T-cell (primary cell): ENCODE measurements at regions of chr16 and their contacts with region 1.

Region 1: GRCh38 chr16:29641561-29641960 is 21.5 kb upstream of the SPN start:
- DNase-seq: peak in 2 of 35 experiments; percentile 6 to 56
- ATAC-seq: peak; percentile 33 to 72 (median 50)
- H3K4me3 ChIP-seq: no peak overlapping the region
- H3K4me3 Mint-ChIP-seq: peak overlapping the region in 1 of 3 donors; percentile 75
- H3K27ac ChIP-seq: peak overlapping the region; percentile 23
- H3K27ac Mint-ChIP-seq: peak overlapping the region; percentile 34 to 65
- H3K4me1 ChIP-seq: peaks cover 6 to 19% of the 10 kb centered on the region in 2 experiments
- H3K4me1 Mint-ChIP-seq: peaks cover 22 to 33% (median 30%) of the 10 kb centered on the region in 3 donors
- H3K27me3 ChIP-seq: no peaks in the 10 kb centered on the region
- H3K27me3 Mint-ChIP-seq: no peaks in the 10 kb centered on the region

Region 2: GRCh38 chr16:29656688-29657523 is 15.3 kb after region 1 on chr16:
- CTCF ChIA-PET with region 1: no interaction called
- POLR2A ChIA-PET with region 1: interaction called in 1 of 2 experiments, 11 read pairs
- DNase-seq: no peak
- ATAC-seq: no peak
- H3K4me3 ChIP-seq: no peak overlapping the region
- H3K4me3 Mint-ChIP-seq: no peak overlapping the region
- H3K27ac ChIP-seq: no peak overlapping the region
- H3K27ac Mint-ChIP-seq: peak overlapping the region; percentile 59 to 79
- H3K4me1 ChIP-seq: peaks cover 5 to 20% of the 10 kb centered on the region in 2 experiments
- H3K4me1 Mint-ChIP-seq: peaks cover 27 to 37% (median 27%) of the 10 kb centered on the region in 3 donors
- H3K27me3 ChIP-seq: no peaks in the 10 kb centered on the region
- H3K27me3 Mint-ChIP-seq: no peaks in the 10 kb centered on the region

Region 3: DNA sequence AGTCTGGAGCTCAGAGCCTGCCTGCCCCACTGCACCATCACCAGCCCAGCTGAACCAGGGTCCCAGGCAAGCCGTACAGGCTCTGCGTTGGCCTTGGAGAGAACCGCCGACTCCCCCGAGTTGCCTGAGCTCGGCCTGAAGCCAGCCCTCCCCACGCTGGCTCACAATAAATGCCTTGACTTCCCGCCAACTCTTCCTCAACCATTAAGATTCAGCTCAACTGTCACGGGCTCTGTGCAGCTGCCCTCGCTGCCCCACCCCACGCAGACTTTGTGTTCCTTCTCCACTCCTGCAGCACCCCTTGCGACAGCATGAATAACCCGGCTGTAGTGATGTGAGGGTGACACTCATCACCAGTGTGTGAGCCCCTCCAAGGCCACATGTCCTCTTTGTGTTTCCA is 32.6 kb after region 1 on chr16:
- CTCF ChIA-PET with region 1: interaction called in 1 of 2 experiments, 4 read pairs
- POLR2A ChIA-PET with region 1: interaction called in 1 of 2 experiments, 11 read pairs
- DNase-seq: no peak
- ATAC-seq: peak in 2 of 4 experiments; percentile 25 to 38
- H3K4me3 ChIP-seq: no peak overlapping the region
- H3K4me3 Mint-ChIP-seq: no peak overlapping the region
- H3K27ac ChIP-seq: no peak overlapping the region
- H3K27ac Mint-ChIP-seq: peak overlapping the region in 1 of 2 donors; percentile 65
- H3K4me1 ChIP-seq: peaks cover 0 to 29% of the 10 kb centered on the region in 2 experiments
- H3K4me1 Mint-ChIP-seq: peaks cover 12 to 41% (median 25%) of the 10 kb centered on the region in 3 donors
- H3K27me3 ChIP-seq: no peaks in the 10 kb centered on the region
- H3K27me3 Mint-ChIP-seq: no peaks in the 10 kb centered on the region

Region 4: GRCh38 chr16:29694384-29695195 is 53.0 kb after region 1 on chr16:
- CTCF ChIA-PET with region 1: no interaction called
- POLR2A ChIA-PET with region 1: no interaction called
- DNase-seq: no peak
- ATAC-seq: no peak
- H3K4me3 ChIP-seq: no peak overlapping the region
- H3K4me3 Mint-ChIP-seq: no peak overlapping the region
- H3K27ac ChIP-seq: no peak overlapping the region
- H3K27ac Mint-ChIP-seq: no peak overlapping the region
- H3K4me1 ChIP-seq: peaks cover 0 to 7% of the 10 kb centered on the region in 2 experiments
- H3K4me1 Mint-ChIP-seq: peaks cover 6 to 10% (median 6%) of the 10 kb centered on the region in 3 donors
- H3K27me3 ChIP-seq: no peaks in the 10 kb centered on the region
- H3K27me3 Mint-ChIP-seq: no peaks in the 10 kb centered on the region

Region 5: GRCh38 chr16:29729116-29729521 is 87.6 kb after region 1 on chr16:
- CTCF ChIA-PET with region 1: no interaction called
- POLR2A ChIA-PET with region 1: no interaction called
- DNase-seq: peak in 1 of 35 experiments; percentile 33
- ATAC-seq: no peak
- H3K4me3 ChIP-seq: no peak overlapping the region
- H3K4me3 Mint-ChIP-seq: no peak overlapping the region
- H3K27ac ChIP-seq: no peak overlapping the region
- H3K27ac Mint-ChIP-seq: no peak overlapping the region
- H3K4me1 ChIP-seq: peaks cover 0 to 26% of the 10 kb centered on the region in 2 experiments
- H3K4me1 Mint-ChIP-seq: peaks cover 25 to 39% (median 34%) of the 10 kb centered on the region in 3 donors
- H3K27me3 ChIP-seq: no peaks in the 10 kb centered on the region
- H3K27me3 Mint-ChIP-seq: no peaks in the 10 kb centered on the region

Region 6: GRCh38 chr16:30698139-30698815 is 1056.7 kb after region 1 on chr16:
- CTCF ChIA-PET with region 1: no interaction called
- POLR2A ChIA-PET with region 1: interaction called in 1 of 2 experiments, 14 read pairs
- DNase-seq: peak; percentile 98 to 100 (median 99)
- ATAC-seq: peak; percentile 77 to 83 (median 80)
- H3K4me3 ChIP-seq: peak overlapping the region; percentile 82 to 95
- H3K4me3 Mint-ChIP-seq: peak overlapping the region; percentile 84 to 97 (median 92)
- H3K27ac ChIP-seq: peak overlapping the region; percentile 100
- H3K27ac Mint-ChIP-seq: peak overlapping the region; percentile 100
- H3K4me1 ChIP-seq: peaks cover 9 to 34% of the 10 kb centered on the region in 2 experiments
- H3K4me1 Mint-ChIP-seq: peaks cover 39 to 41% (median 39%) of the 10 kb centered on the region in 3 donors
- H3K27me3 ChIP-seq: no peaks in the 10 kb centered on the region
- H3K27me3 Mint-ChIP-seq: no peaks in the 10 kb centered on the region